ENCODE measurements at regions of chr4 and their contacts with region 1.

Region 1: DNA sequence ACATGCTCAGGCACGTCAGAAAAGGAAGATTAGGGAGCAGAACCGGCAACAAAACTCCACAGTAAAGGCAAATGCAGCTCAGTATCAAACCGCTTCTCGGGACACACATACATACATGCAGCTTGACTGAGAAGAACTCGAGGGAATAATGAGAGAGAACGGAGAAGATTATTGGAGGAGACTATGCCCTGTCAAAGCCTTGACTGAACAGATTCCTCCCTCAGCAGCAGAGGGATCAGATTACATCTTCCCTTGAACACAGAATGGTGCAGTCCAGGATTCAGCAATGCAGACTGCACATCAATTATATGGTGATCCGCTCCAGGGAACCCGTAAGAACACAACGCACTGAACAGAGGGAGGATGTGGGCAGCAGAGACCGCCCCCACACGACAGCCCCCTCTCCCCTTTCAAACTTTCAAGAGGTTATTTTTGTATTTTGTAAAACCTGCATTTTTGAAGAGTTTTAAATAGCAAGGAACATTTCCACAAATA is 183.2 kb downstream of the FBXW7 start:
- DNase-seq: no peak

Region 2: GRCh38 chr4:151760712-151761527 is 591.7 kb before region 1 on chr4 and contains the start of gene GATB:
- intact Hi-C with region 1: loop called (anchors 10 kb)
- DNase-seq: peak; percentile 95
- total RNA-seq, gene GATB: 75.1 TPM